Activated CD4-positive, alpha-beta T cell treated with anti-CD3 and anti-CD28 coated beads for 36 hours (primary cell): ENCODE measurements at regions of chr7 and their contacts with region 1.

Region 1: DNA sequence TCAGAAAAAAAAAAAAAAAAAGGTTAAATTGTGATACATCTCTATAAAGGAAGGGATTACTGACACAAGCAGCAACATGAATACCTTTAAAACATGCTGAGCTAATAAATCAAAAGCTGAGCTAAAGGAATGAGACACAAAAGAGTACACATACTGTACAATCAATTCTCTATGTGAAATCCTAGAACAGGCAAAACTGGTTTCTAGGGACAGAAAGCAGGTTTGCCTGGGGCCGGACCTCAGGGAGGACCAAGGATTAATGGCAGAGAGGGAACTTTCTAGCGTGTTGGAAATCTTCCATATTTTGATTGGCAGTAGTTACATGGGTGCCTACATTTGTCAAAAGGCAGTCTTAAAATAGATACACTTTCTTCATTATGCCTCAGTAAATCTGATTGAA is 52.5 kb downstream of the KLRG2 start:
- DNase-seq: no peak
- ATAC-seq: no peak
- H3K4me3 Mint-ChIP-seq: no peak overlapping the region
- H3K27ac Mint-ChIP-seq: no peak overlapping the region
- H3K4me1 Mint-ChIP-seq: peaks cover 7% of the 10 kb centered on the region
- H3K27me3 Mint-ChIP-seq: no peaks in the 10 kb centered on the region

Region 2: DNA sequence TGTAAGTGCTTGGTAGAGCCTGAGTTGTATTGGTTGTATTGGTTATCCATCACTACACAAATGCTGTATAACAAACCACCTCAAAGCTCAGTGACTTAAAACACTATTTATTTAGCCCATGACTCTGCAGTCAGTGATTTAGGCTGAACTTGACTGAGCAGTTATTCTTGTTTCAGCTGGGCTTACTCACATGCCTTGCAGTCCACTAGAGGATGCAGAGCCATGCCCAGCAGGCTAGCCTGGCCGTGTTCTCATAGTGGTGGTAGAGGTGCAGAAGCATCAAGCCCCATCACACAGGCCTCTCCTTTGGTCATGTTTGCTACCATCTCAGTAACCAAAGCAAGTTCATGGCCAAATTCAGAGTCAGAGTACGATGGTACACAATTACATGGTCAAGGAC is 27.4 kb before region 1 on chr7:
- CTCF ChIA-PET with region 1: interaction called, 12 read pairs
- POLR2A ChIA-PET with region 1: no interaction called
- intact Hi-C with region 1: no loop called
- DNase-seq: no peak
- ATAC-seq: no peak
- H3K4me3 Mint-ChIP-seq: no peak overlapping the region
- H3K27ac Mint-ChIP-seq: no peak overlapping the region
- H3K4me1 Mint-ChIP-seq: no peaks in the 10 kb centered on the region
- H3K27me3 Mint-ChIP-seq: no peaks in the 10 kb centered on the region

Region 3: GRCh38 chr7:139446036-139446881 is 15.2 kb after region 1 on chr7:
- CTCF ChIA-PET with region 1: interaction called, 25 read pairs
- POLR2A ChIA-PET with region 1: no interaction called
- intact Hi-C with region 1: no loop called
- DNase-seq: no peak
- ATAC-seq: no peak
- H3K4me3 Mint-ChIP-seq: no peak overlapping the region
- H3K27ac Mint-ChIP-seq: no peak overlapping the region
- H3K4me1 Mint-ChIP-seq: no peaks in the 10 kb centered on the region
- H3K27me3 Mint-ChIP-seq: no peaks in the 10 kb centered on the region

Region 4: DNA sequence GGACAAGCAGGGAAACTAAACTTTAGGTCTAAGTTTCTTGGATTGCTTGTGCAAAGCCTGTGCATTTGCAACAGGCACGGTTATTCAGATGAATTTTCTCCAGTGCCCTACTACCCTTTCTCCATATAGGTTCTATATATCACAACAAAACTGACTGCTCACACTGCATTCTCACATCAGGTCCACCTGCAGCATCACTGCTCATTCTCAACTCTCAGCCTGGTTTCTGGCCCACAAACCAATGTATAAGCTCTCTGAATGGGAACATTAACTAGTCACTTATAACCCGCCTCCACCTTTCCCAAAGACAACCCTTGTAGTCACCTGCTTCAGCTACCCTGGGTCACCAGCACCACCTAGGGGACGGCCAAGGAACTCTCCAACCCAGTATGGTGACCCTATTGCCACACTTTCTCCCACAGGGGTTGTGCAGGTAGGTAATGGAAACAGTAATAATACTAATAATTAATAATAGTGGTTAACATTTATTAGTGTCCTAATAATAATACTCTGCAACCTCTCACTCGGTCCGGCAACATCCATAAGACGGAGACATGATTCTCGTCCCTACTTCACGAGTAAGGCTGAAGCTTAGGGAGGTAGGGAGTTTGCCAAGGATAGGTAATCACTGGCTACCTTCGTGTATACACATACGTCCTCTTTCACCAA is 189.8 kb after region 1 on chr7:
- CTCF ChIA-PET with region 1: interaction called, 11 read pairs
- POLR2A ChIA-PET with region 1: no interaction called
- intact Hi-C with region 1: loop called in 1 of 2 experiments (anchors 2 kb)
- DNase-seq: peak; percentile 82
- ATAC-seq: peak; percentile 89
- H3K4me3 Mint-ChIP-seq: no peak overlapping the region
- H3K27ac Mint-ChIP-seq: no peak overlapping the region
- H3K4me1 Mint-ChIP-seq: peaks cover 27% of the 10 kb centered on the region
- H3K27me3 Mint-ChIP-seq: no peaks in the 10 kb centered on the region